ENCODE measurements at regions of chr17 and their contacts with region 1.

Region 1: GRCh38 chr17:17823433-17824118 is 13.2 kb downstream of the SREBF1 start:
- DNase-seq: peak; percentile 82
- H3K4me3 Mint-ChIP-seq: peak overlapping the region; percentile 75
- H3K27ac Mint-ChIP-seq: peak overlapping the region; percentile 91
- H3K4me1 Mint-ChIP-seq: peaks cover 94% of the 10 kb centered on the region
- H3K27me3 Mint-ChIP-seq: no peaks in the 10 kb centered on the region

Region 2: GRCh38 chr17:17812211-17813057 is 11.1 kb before region 1 on chr17:
- CTCF ChIA-PET with region 1: interaction called, 18 read pairs
- intact Hi-C with region 1: no loop called
- DNase-seq: peak; percentile 72
- H3K4me3 Mint-ChIP-seq: no peak overlapping the region
- H3K27ac Mint-ChIP-seq: peak overlapping the region; percentile 18
- H3K4me1 Mint-ChIP-seq: peaks cover 10% of the 10 kb centered on the region
- H3K27me3 Mint-ChIP-seq: no peaks in the 10 kb centered on the region

Region 3: DNA sequence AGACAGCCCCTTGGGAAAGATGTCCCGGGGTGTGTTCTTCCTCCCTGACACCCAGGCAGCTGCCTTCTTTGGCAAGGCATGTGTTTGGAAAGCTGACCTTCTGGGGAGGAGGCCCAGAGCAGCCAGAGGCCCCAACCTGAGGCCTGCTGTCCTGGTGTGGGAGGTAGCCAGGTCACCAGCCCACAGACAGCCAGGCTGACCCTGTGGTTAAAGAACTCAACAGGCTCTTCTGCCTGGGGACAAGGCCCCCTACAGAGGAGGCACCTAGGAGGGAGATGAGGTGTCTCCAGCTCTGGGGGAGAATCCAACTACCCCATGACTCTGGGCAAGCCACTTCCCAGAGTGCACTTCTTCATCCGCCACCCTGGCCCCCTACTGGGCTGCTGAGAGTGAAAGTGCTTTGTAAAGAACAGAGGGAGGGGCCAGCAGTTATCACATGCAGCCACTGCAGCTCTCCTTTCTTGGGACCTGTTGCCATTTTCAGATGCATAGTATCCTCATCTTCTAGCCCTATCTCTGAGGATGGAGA is 26.3 kb after region 1 on chr17:
- CTCF ChIA-PET with region 1: interaction called, 10 read pairs
- intact Hi-C with region 1: loop called (anchors 1 kb)
- DNase-seq: peak; percentile 94
- H3K4me3 Mint-ChIP-seq: peak overlapping the region; percentile 41
- H3K27ac Mint-ChIP-seq: peak overlapping the region; percentile 95
- H3K4me1 Mint-ChIP-seq: peaks cover 78% of the 10 kb centered on the region
- H3K27me3 Mint-ChIP-seq: no peaks in the 10 kb centered on the region

Region 4: GRCh38 chr17:17966399-17966798 is 142.8 kb after region 1 on chr17:
- CTCF ChIA-PET with region 1: no interaction called
- intact Hi-C with region 1: loop called (anchors 2 kb)
- DNase-seq: peak; percentile 66
- H3K4me3 Mint-ChIP-seq: no peak overlapping the region
- H3K27ac Mint-ChIP-seq: no peak overlapping the region
- H3K4me1 Mint-ChIP-seq: peaks cover 69% of the 10 kb centered on the region
- H3K27me3 Mint-ChIP-seq: no peaks in the 10 kb centered on the region

Region 5: DNA sequence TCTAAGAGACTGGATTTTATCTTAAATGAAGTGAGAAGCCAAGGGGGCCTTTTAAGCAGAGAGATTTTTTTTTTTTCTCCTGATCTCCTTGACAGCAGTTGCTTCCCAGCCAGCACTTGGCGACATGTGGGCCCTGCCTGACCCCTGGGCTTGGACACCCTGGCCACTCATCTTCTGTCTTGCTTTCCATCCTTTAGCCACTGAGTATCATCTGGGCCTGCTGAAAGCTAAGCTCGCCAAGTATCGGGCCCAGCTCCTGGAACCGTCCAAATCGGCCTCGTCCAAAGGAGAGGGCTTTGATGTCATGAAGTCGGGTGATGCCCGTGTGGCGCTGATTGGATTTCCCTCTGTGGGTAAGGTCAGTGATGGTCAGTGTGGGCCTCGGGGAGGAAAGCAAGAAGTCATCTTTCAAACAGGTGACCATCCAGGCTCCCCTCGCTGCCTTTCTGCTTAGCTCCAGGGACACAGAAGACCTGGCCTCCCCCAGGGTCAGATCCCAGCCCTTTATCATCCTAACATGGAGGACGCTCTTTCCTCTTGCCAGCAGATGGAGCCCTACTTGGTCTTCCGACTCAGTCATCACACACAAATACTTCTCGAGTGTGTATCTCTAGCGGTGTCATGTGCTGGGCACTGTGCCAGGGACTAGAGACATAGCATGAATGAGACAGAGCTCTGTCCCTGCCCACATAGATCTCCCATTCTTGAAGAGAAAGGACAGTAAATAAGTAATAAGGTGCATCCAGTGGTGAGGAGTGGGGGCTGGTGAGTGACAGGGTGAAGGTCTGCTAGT is 270.2 kb after region 1 on chr17:
- CTCF ChIA-PET with region 1: no interaction called
- intact Hi-C with region 1: no loop called
- DNase-seq: peak; percentile 43
- H3K4me3 Mint-ChIP-seq: no peak overlapping the region
- H3K27ac Mint-ChIP-seq: no peak overlapping the region
- H3K4me1 Mint-ChIP-seq: peaks cover 23% of the 10 kb centered on the region
- H3K27me3 Mint-ChIP-seq: no peaks in the 10 kb centered on the region

Region 6: GRCh38 chr17:19377602-19378392 is 1554.2 kb after region 1 on chr17:
- CTCF ChIA-PET with region 1: no interaction called
- intact Hi-C with region 1: loop called (anchors 5 kb)
- DNase-seq: peak; percentile 95
- H3K4me3 Mint-ChIP-seq: peak overlapping the region; percentile 99
- H3K27ac Mint-ChIP-seq: peak overlapping the region; percentile 97
- H3K4me1 Mint-ChIP-seq: peaks cover 8% of the 10 kb centered on the region
- H3K27me3 Mint-ChIP-seq: no peaks in the 10 kb centered on the region